ENCODE measurements at regions of chr12 and their contacts with region 1.

Region 1: DNA sequence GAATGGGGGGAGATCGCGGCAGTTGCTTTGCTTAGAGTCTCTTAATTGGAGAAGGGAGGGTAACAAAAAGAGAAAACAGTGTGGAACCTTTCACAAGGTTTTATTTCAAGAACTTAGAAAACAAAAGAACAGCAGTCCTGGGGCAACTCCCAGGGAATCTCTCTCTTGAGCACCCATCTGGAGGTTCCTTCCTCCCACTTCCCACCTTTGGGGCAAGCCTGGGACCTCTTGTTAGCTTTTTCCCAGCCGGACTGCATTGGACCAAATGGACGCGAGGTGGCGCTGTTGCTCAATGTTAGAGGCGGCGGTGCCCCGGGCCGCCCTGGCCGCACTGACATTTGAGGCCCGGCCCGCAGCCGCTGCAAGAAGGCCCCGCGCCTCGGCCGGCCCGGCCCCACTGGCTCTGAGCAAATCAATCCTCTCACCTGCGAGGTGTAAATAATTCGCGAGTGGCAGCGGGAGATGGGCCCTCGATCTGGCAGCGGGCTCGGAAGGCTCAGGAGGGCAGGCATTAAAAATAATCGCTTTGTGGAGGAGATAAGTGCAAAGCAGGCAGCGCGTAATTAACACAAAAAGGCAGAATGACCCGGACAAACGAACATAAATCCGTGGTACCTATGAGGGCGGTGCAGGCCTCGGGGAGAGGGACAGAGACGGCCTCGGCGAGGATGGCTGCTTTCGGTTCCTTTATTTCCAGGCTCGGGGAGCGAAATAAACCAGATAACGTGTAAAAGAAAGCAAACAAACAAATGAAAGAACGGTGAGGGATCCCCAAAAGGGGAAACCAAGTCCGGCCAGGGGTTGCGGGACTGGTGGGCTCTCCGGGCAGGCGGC is 2.7 kb upstream of the HOXC8 start:
- DNase-seq: peak; percentile 67 to 89 (median 79)
- ATAC-seq: peak; percentile 90
- H3K4me3 ChIP-seq: peak overlapping the region; percentile 45
- H3K4me3 Mint-ChIP-seq: peak overlapping the region; percentile 79 to 91 (median 84)
- H3K27ac ChIP-seq: no peak overlapping the region
- H3K27ac Mint-ChIP-seq: peak overlapping the region in 1 of 9 donors; percentile 6
- H3K4me1 ChIP-seq: peaks cover 6 to 21% of the 10 kb centered on the region in 2 donors
- H3K4me1 Mint-ChIP-seq: peaks cover 9 to 54% (median 24%) of the 10 kb centered on the region in 7 donors
- H3K27me3 ChIP-seq: peaks cover 24 to 77% of the 10 kb centered on the region in 2 donors
- H3K27me3 Mint-ChIP-seq: peaks cover 90 to 97% (median 92%) of the 10 kb centered on the region in 5 donors

Region 2: GRCh38 chr12:53251477-53252348 is 754.4 kb before region 1 on chr12:
- CTCF ChIA-PET with region 1: no interaction called
- POLR2A ChIA-PET with region 1: no interaction called
- intact Hi-C with region 1: no loop called
- DNase-seq: peak; percentile 58 to 81 (median 69)
- ATAC-seq: peak; percentile 90
- H3K4me3 ChIP-seq: peak overlapping the region; percentile 95
- H3K4me3 Mint-ChIP-seq: peak overlapping the region; percentile 89 to 98 (median 96)
- H3K27ac ChIP-seq: peak overlapping the region; percentile 95
- H3K27ac Mint-ChIP-seq: peak overlapping the region; percentile 84 to 97 (median 94)
- H3K4me1 ChIP-seq: peaks cover 26 to 38% of the 10 kb centered on the region in 2 donors
- H3K4me1 Mint-ChIP-seq: peaks cover 37 to 59% (median 48%) of the 10 kb centered on the region in 7 donors
- H3K27me3 ChIP-seq: no peaks in the 10 kb centered on the region
- H3K27me3 Mint-ChIP-seq: no peaks in the 10 kb centered on the region

Region 3: GRCh38 chr12:54017878-54018467 is 11.9 kb after region 1 on chr12:
- CTCF ChIA-PET with region 1: interaction called, 4 read pairs
- POLR2A ChIA-PET with region 1: no interaction called
- intact Hi-C with region 1: loop called (anchors 1 to 2 kb)
- DNase-seq: peak; percentile 50 to 73 (median 67)
- ATAC-seq: peak; percentile 86
- H3K4me3 ChIP-seq: peak overlapping the region; percentile 58
- H3K4me3 Mint-ChIP-seq: peak overlapping the region; percentile 69 to 89 (median 84)
- H3K27ac ChIP-seq: no peak overlapping the region
- H3K27ac Mint-ChIP-seq: peak overlapping the region in 2 of 9 donors; percentile 10 to 42
- H3K4me1 ChIP-seq: peaks cover 7 to 15% of the 10 kb centered on the region in 2 donors
- H3K4me1 Mint-ChIP-seq: peaks cover 6 to 33% (median 18%) of the 10 kb centered on the region in 7 donors
- H3K27me3 ChIP-seq: peaks cover 16 to 58% of the 10 kb centered on the region in 2 donors
- H3K27me3 Mint-ChIP-seq: peaks cover 68 to 92% (median 78%) of the 10 kb centered on the region in 5 donors

Region 4: DNA sequence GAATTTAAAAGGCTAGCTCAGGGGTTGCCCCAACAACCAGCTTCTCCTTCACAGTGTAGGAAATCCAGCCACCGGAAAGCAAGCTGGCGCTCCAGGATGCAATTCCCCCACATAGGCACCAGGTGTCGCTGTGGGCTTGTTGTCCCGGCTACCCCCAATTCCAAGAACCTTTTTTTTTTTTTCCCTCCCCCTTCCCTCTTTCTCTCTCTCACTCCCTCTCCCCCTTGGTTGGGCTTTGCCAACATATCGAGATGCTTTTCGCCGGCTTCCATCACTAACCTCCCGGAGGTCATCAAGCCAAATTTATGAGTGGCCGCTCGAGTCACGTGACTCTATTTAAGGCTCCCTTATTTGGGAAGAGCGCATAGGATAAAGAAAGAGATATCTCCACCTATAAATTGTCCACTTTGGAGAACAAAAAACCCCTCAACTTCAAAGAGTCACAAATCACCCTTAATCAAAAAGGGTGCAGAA is 26.6 kb after region 1 on chr12 and contains the start of gene HOXC5:
- CTCF ChIA-PET with region 1: interaction called, 5 read pairs
- POLR2A ChIA-PET with region 1: no interaction called
- intact Hi-C with region 1: loop called in 1 of 2 experiments (anchors 1 kb)
- DNase-seq: peak; percentile 41 to 73 (median 62)
- ATAC-seq: peak; percentile 77
- H3K4me3 ChIP-seq: no peak within 1 kb of the TSS
- H3K4me3 Mint-ChIP-seq: peak within 1 kb of the TSS; percentile 52 to 80 (median 67)
- H3K27ac ChIP-seq: no peak within 1 kb of the TSS
- H3K27ac Mint-ChIP-seq: peak within 1 kb of the TSS in 4 of 9 donors; percentile 12 to 74 (median 49)
- H3K4me1 ChIP-seq: peaks cover 7 to 15% of the 10 kb centered on the region in 2 donors
- H3K4me1 Mint-ChIP-seq: peaks cover 9 to 51% (median 31%) of the 10 kb centered on the region in 7 donors
- H3K27me3 ChIP-seq: peaks cover 23 to 62% of the 10 kb centered on the region in 2 donors
- H3K27me3 Mint-ChIP-seq: peaks cover 74 to 93% (median 84%) of the 10 kb centered on the region in 5 donors
- total RNA-seq, gene HOXC5: not detected

Region 5: DNA sequence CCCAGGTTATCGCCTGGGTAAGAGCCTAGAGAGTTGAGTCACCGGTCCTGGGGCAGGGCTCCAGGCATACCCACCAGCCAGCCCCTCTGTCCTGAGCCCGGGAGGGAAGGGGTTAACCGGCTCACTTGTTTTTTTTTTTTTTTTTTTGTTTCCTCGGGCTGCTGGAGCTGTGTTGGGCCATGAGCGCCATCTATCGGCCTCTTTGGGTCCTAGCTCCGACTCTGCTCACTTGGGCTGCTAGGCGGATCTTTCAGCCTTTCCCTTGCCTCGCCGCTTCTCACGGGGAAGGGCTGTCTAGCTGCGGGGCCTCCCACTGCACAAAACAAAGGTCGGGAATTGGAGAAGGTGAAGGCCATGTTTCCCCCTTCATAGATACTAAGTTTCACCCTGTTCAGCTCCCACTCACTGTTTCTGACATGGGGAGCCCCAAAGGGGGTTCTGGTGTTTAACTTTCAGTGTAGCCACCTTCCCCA is 185.5 kb after region 1 on chr12:
- CTCF ChIA-PET with region 1: interaction called, 55 read pairs
- POLR2A ChIA-PET with region 1: no interaction called
- intact Hi-C with region 1: loop called (anchors 1 kb)
- DNase-seq: peak; percentile 58 to 85 (median 76)
- ATAC-seq: peak; percentile 82
- H3K4me3 ChIP-seq: no peak overlapping the region
- H3K4me3 Mint-ChIP-seq: peak overlapping the region in 3 of 10 donors; percentile 10 to 44 (median 32)
- H3K27ac ChIP-seq: no peak overlapping the region
- H3K27ac Mint-ChIP-seq: peak overlapping the region in 3 of 9 donors; percentile 3 to 48 (median 17)
- H3K4me1 ChIP-seq: peaks cover 8 to 9% of the 10 kb centered on the region in 2 donors
- H3K4me1 Mint-ChIP-seq: peaks cover 17 to 31% (median 27%) of the 10 kb centered on the region in 7 donors
- H3K27me3 ChIP-seq: peaks cover 0 to 6% of the 10 kb centered on the region in 2 donors
- H3K27me3 Mint-ChIP-seq: peaks cover 39 to 61% (median 46%) of the 10 kb centered on the region in 5 donors

Region 6: GRCh38 chr12:54207484-54208294 is 201.6 kb after region 1 on chr12:
- CTCF ChIA-PET with region 1: interaction called, 71 read pairs
- POLR2A ChIA-PET with region 1: interaction called, 3 read pairs
- intact Hi-C with region 1: loop called (anchors 1 kb)
- DNase-seq: peak; percentile 50 to 80 (median 59)
- ATAC-seq: peak; percentile 92
- H3K4me3 ChIP-seq: no peak overlapping the region
- H3K4me3 Mint-ChIP-seq: no peak overlapping the region
- H3K27ac ChIP-seq: no peak overlapping the region
- H3K27ac Mint-ChIP-seq: peak overlapping the region in 1 of 9 donors; percentile 54
- H3K4me1 ChIP-seq: no peaks in the 10 kb centered on the region
- H3K4me1 Mint-ChIP-seq: peaks cover 0 to 6% (median 2%) of the 10 kb centered on the region in 7 donors
- H3K27me3 ChIP-seq: no peaks in the 10 kb centered on the region
- H3K27me3 Mint-ChIP-seq: peaks cover 26 to 61% (median 36%) of the 10 kb centered on the region in 5 donors

Region 7: GRCh38 chr12:54379401-54380201 is 373.5 kb after region 1 on chr12:
- CTCF ChIA-PET with region 1: no interaction called
- POLR2A ChIA-PET with region 1: no interaction called
- intact Hi-C with region 1: loop called in 1 of 2 experiments (anchors 10 kb)
- DNase-seq: peak; percentile 73 to 93 (median 84)
- ATAC-seq: peak; percentile 87
- H3K4me3 ChIP-seq: no peak overlapping the region
- H3K4me3 Mint-ChIP-seq: peak overlapping the region; percentile 43 to 79 (median 59)
- H3K27ac ChIP-seq: no peak overlapping the region
- H3K27ac Mint-ChIP-seq: peak overlapping the region in 3 of 9 donors; percentile 0 to 46 (median 38)
- H3K4me1 ChIP-seq: peaks cover 0 to 3% of the 10 kb centered on the region in 2 donors
- H3K4me1 Mint-ChIP-seq: peaks cover 6 to 19% (median 6%) of the 10 kb centered on the region in 7 donors
- H3K27me3 ChIP-seq: no peaks in the 10 kb centered on the region
- H3K27me3 Mint-ChIP-seq: peaks cover 0 to 5% (median 0%) of the 10 kb centered on the region in 5 donors